AG04450 (cell line): ENCODE measurements at regions of chr1 and their contacts with region 1.

Region 1: DNA sequence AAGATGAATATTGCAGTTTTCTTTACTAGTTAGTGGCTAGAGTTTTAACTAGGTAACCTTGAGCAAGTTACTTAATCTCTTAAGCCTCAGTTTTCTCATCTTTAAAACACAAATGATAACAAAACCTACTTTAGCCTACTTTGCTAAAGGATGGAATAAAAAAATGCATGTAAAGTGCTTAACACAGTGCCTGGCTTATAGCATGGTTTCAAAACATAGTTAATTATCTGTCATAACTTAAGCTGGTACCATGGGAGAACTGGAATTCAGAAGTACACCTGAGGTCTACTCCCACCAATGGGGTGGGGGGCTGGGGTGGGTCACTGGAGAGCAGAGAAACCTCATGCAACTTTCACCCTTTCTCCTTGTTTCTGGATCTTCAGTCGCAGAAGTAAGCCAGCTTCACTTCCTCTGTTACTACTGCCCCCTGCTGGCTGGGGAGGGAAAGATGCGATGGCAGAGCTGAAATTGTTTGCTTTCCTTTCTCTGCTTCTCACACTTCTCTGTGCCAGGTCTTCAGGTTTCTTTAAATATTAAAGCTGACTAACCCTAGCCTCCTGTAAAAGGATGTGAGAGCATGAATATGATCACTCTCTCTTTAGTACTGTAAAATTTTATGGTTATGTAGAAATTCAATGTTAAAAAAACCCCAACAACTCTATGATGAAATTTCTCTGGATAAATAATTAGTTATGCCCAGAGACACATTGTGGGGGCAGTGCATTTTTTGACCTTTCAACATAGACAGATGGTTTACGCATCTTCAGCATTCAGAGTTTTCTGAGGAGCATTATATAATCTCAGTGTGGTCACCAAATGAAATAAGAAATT is 324.2 kb downstream of the HLX start:
- DNase-seq: peak; percentile 41
- H3K4me3 ChIP-seq: no peak overlapping the region
- H3K27ac ChIP-seq: no peak overlapping the region
- H3K27me3 ChIP-seq: no peaks in the 10 kb centered on the region
- CTCF ChIP-seq: peak; percentile 89

Region 2: GRCh38 chr1:220810179-220810653 is 393.2 kb before region 1 on chr1:
- CTCF ChIA-PET with region 1: interaction called, 12 read pairs
- POLR2A ChIA-PET with region 1: no interaction called
- DNase-seq: peak; percentile 66
- H3K4me3 ChIP-seq: peak overlapping the region; percentile 25; the same call in 1 of the 2 replicates
- H3K27ac ChIP-seq: no peak overlapping the region
- H3K27me3 ChIP-seq: peaks cover 9% of the 10 kb centered on the region
- CTCF ChIP-seq: peak; percentile 97

Region 3: DNA sequence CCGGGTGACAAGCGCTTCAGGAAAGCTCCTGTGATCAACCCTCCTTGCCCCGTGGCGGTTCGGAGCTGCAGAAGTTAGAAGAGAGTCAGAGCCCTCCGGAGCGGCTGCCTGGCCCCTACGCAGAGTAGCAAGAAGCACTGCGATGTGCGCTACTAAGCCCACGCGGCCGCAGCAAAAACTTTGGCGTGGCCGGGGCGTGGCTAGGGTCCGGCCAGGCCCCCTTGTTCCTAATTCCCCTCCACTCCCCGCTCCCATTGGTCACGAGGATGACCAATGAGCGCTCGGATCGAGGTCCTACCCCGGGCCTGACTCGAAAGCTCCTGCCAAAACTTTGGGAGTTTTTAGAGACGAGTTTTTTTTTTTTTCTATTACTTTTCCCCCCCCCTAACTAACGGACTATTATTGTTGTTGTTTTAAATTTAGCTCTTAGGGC is 324.3 kb before region 1 on chr1 and contains the start of gene HLX:
- CTCF ChIA-PET with region 1: interaction called, 93 read pairs
- POLR2A ChIA-PET with region 1: no interaction called
- DNase-seq: peak; percentile 79
- H3K4me3 ChIP-seq: peak within 1 kb of the TSS; percentile 77
- H3K27ac ChIP-seq: peak within 1 kb of the TSS; percentile 77
- H3K27me3 ChIP-seq: no peaks in the 10 kb centered on the region
- CTCF ChIP-seq: no peak
- polyA plus RNA-seq, gene HLX: 3.7 TPM in 2 replicates

Region 4: GRCh38 chr1:220928725-220929300 is 274.6 kb before region 1 on chr1:
- CTCF ChIA-PET with region 1: no interaction called
- POLR2A ChIA-PET with region 1: no interaction called
- DNase-seq: no peak
- H3K4me3 ChIP-seq: no peak overlapping the region
- H3K27ac ChIP-seq: no peak overlapping the region
- H3K27me3 ChIP-seq: no peaks in the 10 kb centered on the region
- CTCF ChIP-seq: no peak

Region 5: DNA sequence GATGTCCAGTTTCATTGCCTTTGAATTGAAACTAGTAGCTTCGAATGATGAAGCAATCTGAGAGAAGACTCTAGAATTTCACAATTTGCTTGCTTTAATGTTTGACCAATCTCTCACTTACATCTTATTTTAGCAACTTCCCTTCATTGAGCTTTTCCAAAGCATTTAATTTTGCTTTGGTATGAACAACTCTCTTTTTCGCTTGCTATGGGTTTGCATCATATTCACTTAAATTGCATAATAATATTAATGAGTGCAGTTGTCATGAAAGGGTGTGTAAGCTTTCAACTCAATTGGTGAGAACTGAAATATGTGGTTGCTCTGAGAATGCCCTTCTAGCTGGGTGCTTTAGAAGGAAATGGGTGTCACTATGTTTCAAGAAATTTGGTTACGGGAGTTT is 15.0 kb before region 1 on chr1:
- CTCF ChIA-PET with region 1: interaction called, 17 read pairs
- POLR2A ChIA-PET with region 1: no interaction called
- DNase-seq: no peak
- H3K4me3 ChIP-seq: no peak overlapping the region
- H3K27ac ChIP-seq: no peak overlapping the region
- H3K27me3 ChIP-seq: no peaks in the 10 kb centered on the region
- CTCF ChIP-seq: no peak

Region 6: GRCh38 chr1:221230605-221231004 is 27.2 kb after region 1 on chr1:
- CTCF ChIA-PET with region 1: interaction called, 13 read pairs
- POLR2A ChIA-PET with region 1: no interaction called
- DNase-seq: peak; percentile 3
- H3K4me3 ChIP-seq: no peak overlapping the region
- H3K27ac ChIP-seq: no peak overlapping the region
- H3K27me3 ChIP-seq: no peaks in the 10 kb centered on the region
- CTCF ChIP-seq: no peak

Region 7: DNA sequence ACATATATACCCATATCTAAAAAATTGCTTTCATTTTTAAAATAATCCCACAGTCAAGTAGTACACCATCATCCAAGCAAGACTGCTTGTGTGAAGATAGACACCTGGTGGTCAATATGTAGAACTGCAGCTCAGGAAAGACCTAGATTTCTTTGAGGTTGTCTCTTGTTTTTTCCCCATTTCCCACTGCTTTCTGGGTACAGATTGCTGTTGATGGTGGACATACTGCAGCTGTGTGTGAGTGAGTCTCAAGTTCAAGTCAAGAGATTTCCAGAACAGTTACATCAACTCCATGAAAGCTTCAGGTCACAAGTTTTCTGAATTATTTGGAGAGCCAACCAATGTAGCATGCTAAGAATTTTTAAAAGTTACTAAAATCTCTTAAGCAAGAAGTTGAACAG is 232.1 kb after region 1 on chr1:
- CTCF ChIA-PET with region 1: interaction called, 32 read pairs
- POLR2A ChIA-PET with region 1: no interaction called
- DNase-seq: peak; percentile 65
- H3K4me3 ChIP-seq: no peak overlapping the region
- H3K27ac ChIP-seq: no peak overlapping the region
- H3K27me3 ChIP-seq: no peaks in the 10 kb centered on the region
- CTCF ChIP-seq: peak; percentile 96